Psoas muscle (tissue), 8 donors: ENCODE measurements at regions of chr9 and their contacts with region 1.

Region 1: GRCh38 chr9:121312166-121312565 is 44.2 kb downstream of the GSN start:
- DNase-seq: no peak
- ATAC-seq: no peak
- H3K4me3 ChIP-seq: no peak overlapping the region
- H3K27ac ChIP-seq: no peak overlapping the region
- H3K4me1 ChIP-seq: no peaks in the 10 kb centered on the region
- H3K27me3 ChIP-seq: no peaks in the 10 kb centered on the region
- CTCF ChIP-seq: no peak

Region 2: DNA sequence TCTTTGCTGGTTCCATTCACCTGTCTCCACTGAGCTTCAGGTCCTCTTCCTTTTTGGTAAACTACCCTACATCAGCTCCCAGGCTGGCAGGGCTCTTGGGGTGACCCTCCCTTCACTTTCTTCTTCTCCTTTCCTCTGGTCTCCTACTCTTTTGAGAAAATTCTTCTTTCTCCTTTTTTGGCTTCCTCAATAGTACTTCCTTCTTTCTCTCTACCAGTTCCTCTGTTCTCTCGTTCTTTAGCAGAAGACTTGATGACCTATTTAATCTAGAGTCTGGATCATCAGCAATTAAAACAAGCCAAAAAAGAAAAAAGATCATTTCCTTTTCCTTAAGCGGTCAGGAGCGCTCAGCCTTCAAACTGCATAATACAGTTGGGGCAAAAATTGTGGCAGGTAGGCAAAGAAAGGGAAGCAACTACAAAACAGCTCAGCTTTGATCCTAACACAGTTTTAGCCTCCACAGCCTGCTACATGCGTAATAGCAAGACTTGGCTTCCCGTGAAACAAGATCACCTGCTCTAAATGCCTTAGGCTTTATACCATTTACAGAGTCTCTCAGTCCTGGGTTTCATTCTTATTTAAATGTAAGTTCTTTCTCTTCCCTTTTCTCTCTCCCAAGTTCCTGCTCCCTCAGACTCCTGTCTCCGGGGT is 58.2 kb before region 1 on chr9:
- intact Hi-C with region 1: loop called in 1 of 2 experiments (anchors 5 kb)
- DNase-seq: no peak
- ATAC-seq: no peak
- H3K4me3 ChIP-seq: no peak overlapping the region
- H3K27ac ChIP-seq: no peak overlapping the region
- H3K4me1 ChIP-seq: peaks cover 15% of the 10 kb centered on the region
- H3K27me3 ChIP-seq: no peaks in the 10 kb centered on the region
- CTCF ChIP-seq: no peak

Region 3: GRCh38 chr9:122236681-122237080 is 924.5 kb after region 1 on chr9:
- intact Hi-C with region 1: no loop called
- DNase-seq: no peak
- ATAC-seq: no peak
- H3K4me3 ChIP-seq: no peak overlapping the region
- H3K27ac ChIP-seq: no peak overlapping the region
- H3K4me1 ChIP-seq: no peaks in the 10 kb centered on the region
- H3K27me3 ChIP-seq: no peaks in the 10 kb centered on the region
- CTCF ChIP-seq: no peak